Activated CD4-positive, alpha-beta T cell treated with anti-CD3 and anti-CD28 coated beads for 36 hours (primary cell): ENCODE measurements at regions of chr16 and their contacts with region 1.

Region 1: GRCh38 chr16:61713787-61714186 is 322.5 kb downstream of the CDH8 start:
- DNase-seq: no peak
- ATAC-seq: no peak
- H3K4me3 Mint-ChIP-seq: no peak overlapping the region
- H3K27ac Mint-ChIP-seq: no peak overlapping the region
- H3K4me1 Mint-ChIP-seq: no peaks in the 10 kb centered on the region
- H3K27me3 Mint-ChIP-seq: no peaks in the 10 kb centered on the region

Region 2: GRCh38 chr16:61569028-61569427 is 144.8 kb before region 1 on chr16:
- CTCF ChIA-PET with region 1: no interaction called
- POLR2A ChIA-PET with region 1: no interaction called
- intact Hi-C with region 1: loop called in 1 of 2 experiments (anchors 10 kb)
- DNase-seq: no peak
- ATAC-seq: no peak
- H3K4me3 Mint-ChIP-seq: no peak overlapping the region
- H3K27ac Mint-ChIP-seq: no peak overlapping the region
- H3K4me1 Mint-ChIP-seq: no peaks in the 10 kb centered on the region
- H3K27me3 Mint-ChIP-seq: no peaks in the 10 kb centered on the region

Region 3: DNA sequence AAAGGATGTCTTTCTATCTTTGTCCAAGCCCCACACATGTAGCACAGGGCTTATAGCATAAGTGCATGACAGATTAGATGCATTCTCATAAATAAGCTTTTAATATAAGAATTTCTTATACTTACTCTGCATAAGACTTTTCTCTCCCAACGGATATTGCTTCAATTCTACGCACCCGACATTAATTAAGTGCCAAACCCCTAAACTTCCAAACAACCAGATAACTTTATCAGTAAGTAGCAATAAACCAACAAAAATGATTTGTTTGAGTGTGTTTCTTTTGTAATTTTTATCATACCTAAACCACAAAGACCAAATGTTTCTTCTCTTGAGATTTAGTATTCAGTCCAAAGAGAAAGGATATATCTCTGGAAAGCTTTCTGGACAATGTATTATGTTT is 69.1 kb before region 1 on chr16:
- CTCF ChIA-PET with region 1: no interaction called
- POLR2A ChIA-PET with region 1: no interaction called
- intact Hi-C with region 1: loop called in 1 of 2 experiments (anchors 10 kb)
- DNase-seq: no peak
- ATAC-seq: no peak
- H3K4me3 Mint-ChIP-seq: no peak overlapping the region
- H3K27ac Mint-ChIP-seq: no peak overlapping the region
- H3K4me1 Mint-ChIP-seq: no peaks in the 10 kb centered on the region
- H3K27me3 Mint-ChIP-seq: no peaks in the 10 kb centered on the region

Region 4: GRCh38 chr16:61684541-61684940 is 29.2 kb before region 1 on chr16:
- CTCF ChIA-PET with region 1: no interaction called
- POLR2A ChIA-PET with region 1: no interaction called
- intact Hi-C with region 1: no loop called
- DNase-seq: no peak
- ATAC-seq: no peak
- H3K4me3 Mint-ChIP-seq: no peak overlapping the region
- H3K27ac Mint-ChIP-seq: no peak overlapping the region
- H3K4me1 Mint-ChIP-seq: no peaks in the 10 kb centered on the region
- H3K27me3 Mint-ChIP-seq: no peaks in the 10 kb centered on the region

Region 5: GRCh38 chr16:61871837-61872777 is 158.3 kb after region 1 on chr16:
- CTCF ChIA-PET with region 1: no interaction called
- POLR2A ChIA-PET with region 1: no interaction called
- intact Hi-C with region 1: no loop called
- DNase-seq: no peak
- ATAC-seq: no peak
- H3K4me3 Mint-ChIP-seq: no peak overlapping the region
- H3K27ac Mint-ChIP-seq: no peak overlapping the region
- H3K4me1 Mint-ChIP-seq: no peaks in the 10 kb centered on the region
- H3K27me3 Mint-ChIP-seq: no peaks in the 10 kb centered on the region